Prostate gland (tissue), 2 donors: ENCODE measurements at regions of chr5 and their contacts with region 1.

Region 1: DNA sequence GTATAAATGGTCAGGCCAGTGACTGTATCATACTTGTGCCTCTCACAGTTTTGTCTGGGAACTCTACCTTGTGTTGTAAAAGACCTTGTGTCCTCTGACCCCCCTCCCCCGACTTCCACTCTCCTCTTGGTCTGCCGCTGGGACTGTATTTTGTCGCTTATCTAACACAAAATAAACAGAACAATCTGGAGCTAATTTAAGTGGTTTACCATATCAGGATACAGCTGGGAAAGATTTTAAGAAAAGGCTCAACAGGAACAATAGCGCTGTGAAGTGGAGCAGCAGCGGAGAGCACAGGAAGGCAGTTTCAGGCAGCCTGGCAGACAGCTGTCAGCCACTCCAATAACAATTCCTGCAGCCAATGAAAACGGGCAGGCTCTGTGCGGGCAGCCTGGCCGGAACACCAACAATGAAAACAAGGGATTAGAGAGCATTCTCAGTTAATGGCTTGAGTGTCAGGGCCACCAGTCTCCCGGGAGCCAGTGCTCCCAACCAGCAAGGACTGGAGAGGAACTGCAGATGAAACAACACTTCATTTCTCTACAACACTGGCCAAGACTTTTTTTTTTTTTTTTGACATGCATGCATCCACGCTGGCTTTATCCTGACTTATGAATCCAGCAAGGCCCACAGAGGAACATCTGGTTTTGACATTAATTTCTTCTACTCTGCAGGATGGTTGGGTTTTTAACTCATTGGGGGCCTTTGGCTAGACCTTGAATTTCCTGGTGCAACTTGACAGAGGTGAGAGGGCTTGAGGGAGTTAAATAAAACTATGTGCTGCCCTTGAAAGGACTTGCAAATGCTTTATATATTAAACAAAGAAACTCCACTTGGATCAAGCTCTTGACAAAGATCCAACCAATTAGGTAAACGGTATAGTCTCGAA is 76.7 kb downstream of the ARSB start:
- DNase-seq: no peak
- H3K4me3 ChIP-seq: no peak overlapping the region
- H3K27ac ChIP-seq: peak overlapping the region in 1 of 2 donors; percentile 1
- H3K4me1 ChIP-seq: no peaks in the 10 kb centered on the region
- H3K27me3 ChIP-seq: no peaks in the 10 kb centered on the region
- CTCF ChIP-seq: no peak
- POLR2A ChIP-seq: no peak

Region 2: DNA sequence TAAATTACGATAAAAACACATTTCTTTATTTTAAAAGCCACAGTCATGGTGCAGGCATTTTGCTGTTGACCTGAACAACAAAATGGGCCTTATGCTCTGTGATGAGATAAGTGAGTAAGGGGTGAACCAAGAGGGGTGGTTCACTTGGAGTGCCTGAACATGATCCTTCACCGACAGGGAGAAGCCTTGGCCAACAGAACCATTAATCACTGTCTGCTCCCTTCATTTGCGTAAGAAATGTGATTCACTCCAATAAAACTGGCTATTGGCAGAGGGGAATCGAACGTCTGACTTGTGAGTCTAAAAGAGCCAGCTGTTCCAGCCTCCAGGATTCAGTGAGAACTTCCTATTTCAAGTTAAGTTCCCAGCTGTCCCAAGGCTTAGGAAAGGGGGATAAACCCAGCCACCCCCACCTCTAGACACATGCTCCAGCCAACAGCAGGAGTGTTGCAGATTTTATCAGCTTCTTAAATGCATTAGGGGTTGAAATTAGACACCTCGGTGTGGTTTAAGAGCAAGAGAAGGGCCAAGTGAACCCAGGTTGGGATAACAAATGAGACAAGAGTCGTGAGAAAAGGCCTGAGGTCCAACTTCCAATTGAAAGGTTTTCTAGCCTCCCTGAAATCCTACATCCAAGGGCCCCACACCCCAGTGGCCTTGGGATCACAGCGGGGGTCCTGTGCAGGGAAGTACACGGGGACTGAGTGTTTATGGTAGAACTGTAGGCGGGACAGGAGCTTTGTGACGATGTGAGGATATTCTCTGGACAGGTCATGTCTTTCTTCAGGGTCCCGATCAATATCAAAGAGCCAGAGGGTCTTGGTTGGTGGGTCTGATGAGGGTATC is 128.4 kb before region 1 on chr5:
- intact Hi-C with region 1: loop called (anchors 5 kb)
- DNase-seq: no peak
- H3K4me3 ChIP-seq: no peak overlapping the region
- H3K27ac ChIP-seq: no peak overlapping the region
- H3K4me1 ChIP-seq: no peaks in the 10 kb centered on the region
- H3K27me3 ChIP-seq: no peaks in the 10 kb centered on the region
- CTCF ChIP-seq: no peak
- POLR2A ChIP-seq: no peak